Motor neuron (in vitro differentiated cells): ENCODE measurements at regions of chr1 and their contacts with region 1.

Region 1: DNA sequence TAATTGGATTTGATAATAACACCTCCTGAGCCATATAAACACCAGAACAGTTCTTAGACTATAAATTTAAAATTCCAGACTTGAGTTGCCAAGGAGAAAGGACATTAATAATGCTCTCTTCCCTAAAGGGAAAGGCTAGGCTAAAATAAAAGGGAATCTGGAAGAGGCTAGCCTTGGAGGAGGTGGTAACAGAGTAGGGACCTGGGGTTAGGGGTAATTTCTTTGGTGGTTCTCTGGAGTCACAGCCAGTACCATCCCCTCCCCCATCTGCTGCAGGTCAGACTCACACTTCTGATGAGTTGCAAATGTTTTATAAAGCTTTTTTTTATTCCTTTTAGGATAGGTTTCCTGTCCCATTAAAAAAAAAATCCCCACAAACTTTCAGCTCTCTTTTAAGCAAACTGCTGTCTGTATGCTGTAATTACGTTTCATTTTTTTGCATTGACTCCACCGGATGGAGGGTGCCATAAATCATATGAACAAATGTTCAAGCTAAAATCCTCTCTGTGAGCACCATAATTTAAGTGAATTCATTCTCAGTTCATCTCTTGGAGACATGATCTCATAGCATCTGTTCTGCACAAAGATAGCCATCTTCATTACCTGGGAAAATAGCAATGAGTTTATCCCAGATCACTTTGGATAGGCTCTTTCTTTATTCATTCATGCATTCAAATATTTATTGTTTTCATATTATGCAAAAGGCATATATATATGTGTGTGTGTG is 379.6 kb downstream of the TTLL7 start:
- ATAC-seq: peak in 5 of 8 experiments; percentile 75 to 92 (median 81)
- H3K4me3 ChIP-seq: no peak overlapping the region
- H3K27ac ChIP-seq: no peak overlapping the region
- H3K4me1 ChIP-seq: peaks cover 20 to 43% of the 10 kb centered on the region in 2 donors

Region 2: GRCh38 chr1:83508485-83509151 is 110.7 kb before region 1 on chr1:
- in situ Hi-C with region 1: loop called in 1 of 9 experiments (anchors 25 kb)
- ATAC-seq: peak in 3 of 8 experiments; percentile 34 to 85 (median 56)
- H3K4me3 ChIP-seq: no peak overlapping the region
- H3K27ac ChIP-seq: no peak overlapping the region
- H3K4me1 ChIP-seq: peaks cover 0 to 7% of the 10 kb centered on the region in 2 donors

Region 3: DNA sequence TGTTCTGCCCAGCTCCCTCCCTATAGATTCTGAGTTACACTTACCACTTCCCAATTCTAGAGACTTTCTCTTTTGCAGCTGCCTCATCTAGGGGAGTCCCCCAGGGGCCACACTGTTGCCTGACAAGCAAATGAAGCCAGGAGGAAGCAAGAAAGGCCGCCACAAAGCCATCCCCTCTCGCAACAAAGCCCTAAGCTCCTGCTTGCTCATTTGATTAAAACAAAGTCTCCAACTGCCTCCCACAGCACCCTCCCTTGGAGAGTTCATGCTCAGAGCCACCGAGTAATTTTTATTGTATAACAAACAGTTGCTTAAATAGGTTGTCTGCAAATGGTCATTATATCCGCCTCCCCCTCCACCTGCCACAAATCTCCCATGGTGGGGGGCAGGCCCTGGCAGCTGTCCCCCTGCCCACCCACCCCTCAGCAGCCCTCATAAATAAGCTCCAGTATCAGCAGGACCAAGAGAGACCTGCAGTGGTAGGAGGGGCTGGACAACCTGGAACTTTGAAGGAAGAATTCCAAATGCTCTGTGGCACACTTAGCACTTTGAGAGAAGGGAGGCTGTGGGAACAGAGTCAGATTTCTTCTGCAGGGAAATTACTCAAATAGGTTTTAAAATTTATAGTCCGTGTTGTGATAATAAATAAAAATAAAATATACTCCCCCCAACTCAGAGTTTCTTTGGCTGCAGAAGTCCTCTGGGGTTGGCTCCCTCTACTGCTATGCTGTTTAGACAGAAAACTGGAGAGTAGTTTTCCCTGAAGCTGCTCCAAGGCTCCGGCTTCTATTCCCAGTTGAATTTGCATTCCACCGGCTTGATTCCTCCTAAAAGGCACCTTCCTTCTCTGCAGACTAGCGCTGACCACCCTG is 142.1 kb after region 1 on chr1:
- in situ Hi-C with region 1: no loop called
- ATAC-seq: peak in 5 of 8 experiments; percentile 39 to 78 (median 70)
- H3K4me3 ChIP-seq: no peak overlapping the region
- H3K27ac ChIP-seq: no peak overlapping the region
- H3K4me1 ChIP-seq: peaks cover 20 to 21% of the 10 kb centered on the region in 2 donors

Region 4: DNA sequence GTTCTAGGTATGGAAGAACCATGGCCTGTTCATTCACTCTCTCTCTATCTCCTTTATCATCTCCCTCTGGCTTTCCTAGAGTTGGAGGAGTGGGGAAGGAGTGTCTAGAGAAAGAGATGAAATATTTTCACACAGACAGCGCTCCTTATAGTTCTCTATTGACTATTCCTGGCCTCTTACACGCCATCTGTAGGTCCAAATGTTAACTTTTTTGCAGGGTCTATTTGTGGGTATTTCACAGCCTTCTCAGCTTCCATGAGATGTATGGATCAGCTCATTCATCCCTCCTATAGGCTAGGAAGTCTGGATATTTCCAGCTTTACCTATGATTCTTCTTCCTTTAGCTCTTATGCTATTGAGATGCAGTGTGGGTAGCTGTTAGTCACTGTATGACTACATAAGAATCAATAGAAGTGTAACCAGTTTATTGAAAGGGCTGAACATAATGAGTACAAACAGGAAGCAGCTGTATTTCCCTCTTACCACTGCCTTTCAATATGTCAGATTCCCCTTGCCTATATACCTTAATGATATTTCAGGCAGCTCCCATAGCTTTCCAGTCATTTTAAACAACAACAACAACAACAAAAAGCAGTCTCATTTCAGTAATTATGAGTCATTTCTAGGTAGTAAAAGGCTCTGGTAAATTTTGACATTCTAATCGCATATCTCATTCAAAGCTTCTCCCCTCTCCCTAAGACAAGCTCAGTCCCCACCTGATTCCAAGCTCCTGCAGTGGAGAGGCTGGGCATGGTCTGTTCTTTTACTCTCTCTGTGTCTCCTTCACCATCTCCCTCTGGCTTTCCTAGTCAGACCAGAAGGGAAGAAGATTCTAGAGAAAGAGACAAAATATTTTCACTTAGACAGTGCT is 230.1 kb after region 1 on chr1:
- in situ Hi-C with region 1: loop called in 1 of 9 experiments (anchors 25 kb)
- ATAC-seq: peak in 5 of 8 experiments; percentile 69 to 91 (median 82)
- H3K4me3 ChIP-seq: no peak overlapping the region
- H3K27ac ChIP-seq: no peak overlapping the region
- H3K4me1 ChIP-seq: peaks cover 9 to 17% of the 10 kb centered on the region in 2 donors

Region 5: DNA sequence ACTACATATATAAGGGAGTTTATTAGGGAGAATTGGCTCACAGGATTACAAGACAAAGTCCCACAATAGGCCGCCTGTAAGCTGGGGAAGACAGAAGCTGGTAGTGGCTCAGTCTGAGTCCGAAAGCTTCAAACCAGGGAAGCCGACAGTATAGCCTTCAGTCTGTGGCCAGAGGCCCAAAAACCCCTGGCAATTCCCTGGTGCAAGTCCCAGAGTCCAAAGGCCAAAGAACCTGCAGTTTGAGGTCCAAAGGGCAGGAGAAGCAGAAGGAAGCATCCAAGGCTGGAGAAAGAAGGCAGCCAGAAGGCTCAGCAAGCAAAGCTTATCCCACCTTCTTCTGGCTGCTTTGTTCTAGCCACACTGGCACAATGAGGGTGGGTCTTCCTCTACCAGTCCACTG is 365.7 kb after region 1 on chr1:
- in situ Hi-C with region 1: no loop called
- ATAC-seq: no peak
- H3K4me3 ChIP-seq: no peak overlapping the region
- H3K27ac ChIP-seq: no peak overlapping the region
- H3K4me1 ChIP-seq: no peaks in the 10 kb centered on the region